ENCODE measurements at regions of chr21 and their contacts with region 1.

Region 1: DNA sequence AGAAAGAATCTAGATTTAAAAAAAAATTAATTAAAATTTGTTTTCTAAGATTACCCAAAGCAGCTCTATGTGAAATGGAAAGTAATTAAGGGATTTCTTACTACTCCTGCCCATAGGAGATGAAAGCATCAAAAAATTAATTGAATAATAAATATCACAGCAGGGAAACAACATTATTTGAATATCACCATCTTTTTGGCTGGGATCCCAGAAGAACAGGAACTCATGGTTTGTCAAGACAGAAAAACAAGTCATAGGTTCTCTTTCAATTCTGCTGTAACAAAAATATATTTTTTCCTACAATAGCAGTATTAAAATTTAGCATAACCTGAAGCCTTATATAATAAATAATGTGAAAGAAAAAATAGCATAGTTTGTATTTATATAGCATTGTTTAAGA is 1713.4 kb downstream of the NCAM2 start:
- DNase-seq: no peak
- H3K4me3 ChIP-seq: no peak overlapping the region
- H3K27ac ChIP-seq: no peak overlapping the region
- H3K4me1 ChIP-seq: no peaks in the 10 kb centered on the region
- H3K27me3 ChIP-seq: no peaks in the 10 kb centered on the region
- CTCF ChIP-seq: no peak
- POLR2A ChIP-seq: no peak

Region 2: DNA sequence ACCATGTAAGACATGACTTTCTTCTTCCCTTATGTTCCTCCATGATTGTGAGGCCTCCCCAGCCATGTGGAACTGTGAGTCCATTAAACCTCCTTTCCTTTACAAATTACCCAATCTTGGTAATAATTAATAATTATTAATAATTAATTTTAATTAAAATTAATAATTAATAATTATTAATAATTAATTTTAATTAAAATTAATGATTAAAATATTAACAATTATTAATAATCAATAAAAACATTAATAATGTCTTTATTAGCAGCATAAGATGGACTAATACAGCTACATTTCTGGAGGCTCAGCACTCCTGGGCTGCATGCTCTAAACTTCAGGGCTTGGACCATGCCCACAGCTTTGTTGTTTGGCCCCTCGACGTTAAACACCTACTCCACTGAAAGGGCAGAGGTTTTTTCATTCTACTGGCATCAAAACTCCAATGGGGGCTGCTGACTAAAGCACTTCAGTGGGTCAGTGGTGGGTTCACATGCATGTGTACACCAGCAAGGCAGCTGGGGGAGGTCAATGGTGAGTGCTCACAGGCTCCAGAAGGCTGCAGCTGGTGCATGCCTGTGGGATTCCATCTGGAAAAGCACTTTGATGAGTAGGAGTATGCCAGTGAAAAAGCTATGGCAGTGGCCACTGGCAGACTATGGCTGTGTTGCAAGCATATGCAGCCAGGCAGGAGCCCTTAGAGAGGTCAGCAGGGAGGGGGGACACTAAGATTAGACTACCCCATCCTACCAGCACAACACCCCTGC is 1152.2 kb before region 1 on chr21:
- intact Hi-C with region 1: loop called (anchors 10 kb)
- DNase-seq: no peak
- H3K4me3 ChIP-seq: no peak overlapping the region
- H3K27ac ChIP-seq: no peak overlapping the region
- H3K4me1 ChIP-seq: no peaks in the 10 kb centered on the region
- H3K27me3 ChIP-seq: no peaks in the 10 kb centered on the region
- CTCF ChIP-seq: no peak
- POLR2A ChIP-seq: no peak

Region 3: GRCh38 chr21:22941791-22942190 is 230.2 kb after region 1 on chr21:
- intact Hi-C with region 1: no loop called
- DNase-seq: no peak
- H3K4me3 ChIP-seq: no peak overlapping the region
- H3K27ac ChIP-seq: no peak overlapping the region
- H3K4me1 ChIP-seq: no peaks in the 10 kb centered on the region
- H3K27me3 ChIP-seq: no peaks in the 10 kb centered on the region
- CTCF ChIP-seq: no peak
- POLR2A ChIP-seq: no peak

Measured in breast epithelium (tissue), 4 donors.